Breast epithelium (tissue), 4 donors: ENCODE measurements at regions of chr12 and their contacts with region 1.

Region 1: GRCh38 chr12:40107098-40107802 is 1.4 kb upstream of the SLC2A13 start:
- DNase-seq: peak; percentile 78 to 93
- H3K4me3 ChIP-seq: peak overlapping the region; percentile 40 to 94 (median 87)
- H3K27ac ChIP-seq: peak overlapping the region in 1 of 2 donors; percentile 14
- H3K4me1 ChIP-seq: peaks cover 0 to 4% of the 10 kb centered on the region in 2 donors
- H3K27me3 ChIP-seq: no peaks in the 10 kb centered on the region
- CTCF ChIP-seq: peak; percentile 78 to 86 (median 80)
- POLR2A ChIP-seq: no peak

Region 2: DNA sequence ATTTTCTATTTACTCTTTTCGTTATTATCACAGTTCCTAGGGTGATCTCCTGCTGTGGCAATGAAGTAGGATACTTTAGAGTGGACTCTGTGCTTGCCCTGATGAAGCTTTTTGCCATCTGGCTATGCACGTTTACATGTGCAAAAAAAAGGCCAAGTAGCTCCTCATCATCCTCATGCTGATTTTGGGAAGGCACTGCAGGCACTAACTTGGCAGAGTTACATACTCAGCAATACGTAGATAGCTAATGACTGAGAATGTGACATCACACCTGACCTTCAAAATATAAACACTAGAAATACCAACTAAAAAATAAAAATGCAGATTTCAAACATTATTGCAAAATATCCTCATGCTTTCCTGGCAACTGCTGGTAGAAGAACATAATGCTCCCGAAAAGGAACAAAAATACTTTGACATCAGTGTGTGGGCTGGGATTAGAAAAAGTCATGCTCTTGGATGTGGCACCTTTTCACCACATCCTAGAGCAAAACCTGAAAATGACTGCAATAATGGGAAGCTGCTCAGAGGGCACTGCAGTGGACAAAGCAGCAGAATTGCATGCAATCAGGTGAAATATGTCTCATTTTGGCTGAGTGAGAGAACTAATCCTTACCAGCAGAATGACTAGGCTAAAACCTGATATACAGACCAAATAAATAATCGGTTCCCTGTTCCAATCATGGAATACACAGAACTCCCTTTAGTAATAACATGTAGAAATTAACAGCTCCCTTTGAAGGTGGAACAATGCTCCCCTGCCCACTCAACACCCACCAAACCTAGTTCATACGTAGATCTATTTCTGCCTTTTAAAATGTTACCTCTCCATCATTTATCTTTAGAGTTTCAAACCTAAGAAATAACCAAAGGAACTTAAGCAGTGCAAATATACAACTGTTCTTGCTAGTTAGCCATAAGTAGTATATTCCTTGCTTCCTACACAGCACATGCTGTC is 334.3 kb before region 1 on chr12:
- intact Hi-C with region 1: loop called (anchors 10 kb)
- DNase-seq: no peak
- H3K4me3 ChIP-seq: no peak overlapping the region
- H3K27ac ChIP-seq: no peak overlapping the region
- H3K4me1 ChIP-seq: no peaks in the 10 kb centered on the region
- H3K27me3 ChIP-seq: no peaks in the 10 kb centered on the region
- CTCF ChIP-seq: no peak
- POLR2A ChIP-seq: no peak

Region 3: GRCh38 chr12:40045656-40046055 is 61.6 kb before region 1 on chr12:
- intact Hi-C with region 1: no loop called
- DNase-seq: no peak
- H3K4me3 ChIP-seq: no peak overlapping the region
- H3K27ac ChIP-seq: no peak overlapping the region
- H3K4me1 ChIP-seq: no peaks in the 10 kb centered on the region
- H3K27me3 ChIP-seq: no peaks in the 10 kb centered on the region
- CTCF ChIP-seq: no peak
- POLR2A ChIP-seq: no peak

Region 4: DNA sequence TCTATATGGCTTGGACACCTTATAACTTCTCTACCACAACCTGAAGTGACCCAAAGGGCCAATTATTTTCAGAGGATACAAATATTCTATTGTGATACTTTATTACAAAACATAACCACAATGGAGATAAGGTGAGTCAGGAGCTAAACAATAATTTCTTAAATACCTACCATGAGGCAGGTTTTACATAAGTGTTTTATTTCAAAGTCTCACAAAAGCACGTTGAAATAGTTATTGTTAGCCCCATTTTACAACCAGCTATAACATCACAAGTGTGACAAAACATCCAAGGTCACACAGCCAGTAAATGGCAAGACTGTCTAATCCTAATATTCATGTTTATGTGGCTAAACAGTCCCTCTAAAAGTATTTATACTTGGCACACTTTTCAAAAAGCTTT is 41.6 kb before region 1 on chr12:
- intact Hi-C with region 1: loop called (anchors 2 kb)
- DNase-seq: no peak
- H3K4me3 ChIP-seq: no peak overlapping the region
- H3K27ac ChIP-seq: no peak overlapping the region
- H3K4me1 ChIP-seq: no peaks in the 10 kb centered on the region
- H3K27me3 ChIP-seq: no peaks in the 10 kb centered on the region
- CTCF ChIP-seq: no peak
- POLR2A ChIP-seq: no peak